Dendritic cell treated with granulocyte-macrophage colony-stimulating factor and Interleukin-4, amounts not matched to agents 40 ng/mL and 50 ng/mL, for 4 days (primary cell): ENCODE measurements at regions of chr5 and their contacts with region 1.

Region 1: GRCh38 chr5:180071531-180072255 is at the start of gene RNF130:
- H3K4me3 Mint-ChIP-seq: peak within 1 kb of the TSS; percentile 92
- H3K27ac Mint-ChIP-seq: peak within 1 kb of the TSS; percentile 96
- H3K4me1 Mint-ChIP-seq: peaks cover 36% of the 10 kb centered on the region
- H3K27me3 Mint-ChIP-seq: peaks cover 3% of the 10 kb centered on the region

Region 2: DNA sequence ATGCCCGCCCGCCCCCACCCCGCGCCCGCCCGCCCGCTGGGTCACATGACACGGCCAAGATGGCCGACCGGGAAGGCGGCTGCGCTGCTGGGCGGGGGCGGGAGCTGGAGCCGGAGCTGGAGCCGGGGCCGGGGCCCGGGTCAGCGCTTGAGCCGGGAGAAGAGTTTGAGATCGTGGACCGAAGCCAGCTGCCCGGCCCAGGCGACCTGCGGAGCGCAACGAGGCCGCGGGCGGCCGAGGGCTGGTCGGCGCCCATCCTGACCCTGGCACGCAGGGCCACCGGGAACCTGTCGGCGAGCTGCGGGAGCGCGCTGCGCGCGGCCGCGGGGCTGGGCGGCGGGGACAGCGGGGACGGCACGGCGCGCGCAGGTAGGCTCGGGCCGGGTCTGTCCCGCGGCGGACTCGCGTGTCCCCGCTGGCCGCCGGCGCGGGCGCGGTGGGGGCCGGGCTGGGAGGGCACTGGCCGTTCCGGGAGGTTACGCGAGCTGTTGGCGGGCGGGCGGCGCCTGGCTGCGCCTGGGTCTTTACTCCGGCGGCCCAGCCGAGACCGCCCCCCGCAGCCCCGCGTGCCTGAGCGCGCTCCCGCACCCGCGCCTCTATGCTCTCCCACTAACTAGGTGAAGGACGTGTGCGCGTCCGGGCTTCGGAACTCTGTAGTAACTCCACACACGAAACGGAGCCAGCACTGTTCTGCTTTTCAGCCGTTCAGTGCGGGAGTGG is 521.0 kb before region 1 on chr5 and contains the start of gene RUFY1:
- intact Hi-C with region 1: loop called (anchors 5 kb)
- H3K4me3 Mint-ChIP-seq: peak within 1 kb of the TSS; percentile 99
- H3K27ac Mint-ChIP-seq: peak within 1 kb of the TSS; percentile 99
- H3K4me1 Mint-ChIP-seq: peaks cover 26% of the 10 kb centered on the region
- H3K27me3 Mint-ChIP-seq: no peaks in the 10 kb centered on the region

Region 3: GRCh38 chr5:179806250-179807222 is 265.2 kb before region 1 on chr5 and contains the start of gene MGAT4B:
- intact Hi-C with region 1: loop called (anchors 5 kb)
- H3K4me3 Mint-ChIP-seq: peak within 1 kb of the TSS; percentile 86
- H3K27ac Mint-ChIP-seq: peak within 1 kb of the TSS; percentile 77
- H3K4me1 Mint-ChIP-seq: peaks cover 56% of the 10 kb centered on the region
- H3K27me3 Mint-ChIP-seq: no peaks in the 10 kb centered on the region

Region 4: GRCh38 chr5:179914032-179914755 is 157.5 kb before region 1 on chr5:
- intact Hi-C with region 1: loop called (anchors 10 kb)
- H3K4me3 Mint-ChIP-seq: no peak overlapping the region
- H3K27ac Mint-ChIP-seq: peak overlapping the region; percentile 87
- H3K4me1 Mint-ChIP-seq: peaks cover 49% of the 10 kb centered on the region
- H3K27me3 Mint-ChIP-seq: peaks cover 3% of the 10 kb centered on the region

Region 5: GRCh38 chr5:180090098-180090768 is 18.5 kb after region 1 on chr5:
- intact Hi-C with region 1: loop called (anchors 2 kb)
- H3K4me3 Mint-ChIP-seq: peak overlapping the region; percentile 88
- H3K27ac Mint-ChIP-seq: peak overlapping the region; percentile 92
- H3K4me1 Mint-ChIP-seq: peaks cover 60% of the 10 kb centered on the region
- H3K27me3 Mint-ChIP-seq: peaks cover 3% of the 10 kb centered on the region